ENCODE measurements at regions of chr15 and their contacts with region 1.

Region 1: DNA sequence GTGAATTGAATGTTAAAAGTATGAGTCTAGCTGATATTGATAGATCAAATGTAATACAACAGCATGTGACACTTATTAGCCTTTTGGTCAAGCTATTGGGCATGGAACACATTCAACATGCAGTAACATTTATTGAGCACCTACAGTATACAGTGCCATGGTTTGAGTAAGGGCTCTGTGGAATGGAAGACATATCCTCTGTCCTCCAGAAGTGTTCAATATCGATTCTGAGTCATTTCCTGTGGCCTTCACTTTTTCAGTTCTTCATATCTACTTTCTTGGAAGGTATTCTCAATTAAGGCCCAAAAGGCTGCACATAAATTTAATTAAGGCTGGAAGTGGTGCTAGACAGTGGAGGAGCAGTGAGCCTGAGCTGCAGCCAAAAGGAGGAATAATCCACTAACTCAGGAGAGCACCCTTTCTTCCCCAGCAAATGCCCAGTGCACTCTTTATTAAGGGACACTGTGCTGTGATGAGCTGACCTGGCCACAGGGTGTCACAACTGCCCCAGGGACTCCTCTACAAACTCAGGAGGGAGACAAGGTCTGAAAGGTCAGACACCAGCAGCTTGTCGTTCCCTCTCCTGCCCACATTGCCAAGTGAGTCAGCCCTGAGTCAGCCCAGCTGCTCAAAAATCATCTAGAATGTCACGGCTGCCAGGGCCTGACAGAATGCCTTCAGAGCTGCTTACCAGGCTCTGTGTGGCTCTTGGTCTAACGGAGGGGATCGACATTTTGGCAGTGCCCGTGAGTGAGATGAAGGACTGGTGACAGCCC is 544.8 kb downstream of the AGBL1 start:
- DNase-seq: peak; percentile 90
- ATAC-seq: peak; percentile 100
- H3K4me3 Mint-ChIP-seq: peak overlapping the region; percentile 15
- H3K27ac Mint-ChIP-seq: peak overlapping the region; percentile 53
- H3K4me1 Mint-ChIP-seq: peaks cover 42% of the 10 kb centered on the region
- H3K27me3 Mint-ChIP-seq: peaks cover 4% of the 10 kb centered on the region

Region 2: GRCh38 chr15:86743283-86743903 is 118.9 kb after region 1 on chr15:
- CTCF ChIA-PET with region 1: interaction called, 48 read pairs
- POLR2A ChIA-PET with region 1: no interaction called
- intact Hi-C with region 1: loop called (anchors 1 kb)
- DNase-seq: peak; percentile 77
- ATAC-seq: peak; percentile 70
- H3K4me3 Mint-ChIP-seq: no peak overlapping the region
- H3K27ac Mint-ChIP-seq: no peak overlapping the region
- H3K4me1 Mint-ChIP-seq: peaks cover 2% of the 10 kb centered on the region
- H3K27me3 Mint-ChIP-seq: no peaks in the 10 kb centered on the region

Measured in activated CD4-positive, alpha-beta T cell treated with anti-CD3 and anti-CD28 coated beads for 36 hours (primary cell).